Naive thymus-derived CD4-positive, alpha-beta T cell (primary cell): ENCODE measurements at regions of chr19 and their contacts with region 1.

Region 1: GRCh38 chr19:6590827-6591319 is at the start of gene CD70:
- DNase-seq: peak in 6 of 9 donors; percentile 10 to 68 (median 17)
- ATAC-seq: peak; percentile 74
- H3K4me3 ChIP-seq: peak within 1 kb of the TSS; percentile 56
- H3K4me3 Mint-ChIP-seq: peak within 1 kb of the TSS; percentile 58 to 93 (median 82)
- H3K27ac ChIP-seq: no peak within 1 kb of the TSS
- H3K27ac Mint-ChIP-seq: peak within 1 kb of the TSS in 2 of 9 donors; percentile 1 to 87
- H3K4me1 ChIP-seq: peaks cover 30 to 46% of the 10 kb centered on the region in 2 donors
- H3K4me1 Mint-ChIP-seq: peaks cover 40 to 61% (median 47%) of the 10 kb centered on the region in 7 donors
- H3K27me3 ChIP-seq: peaks cover 0 to 20% of the 10 kb centered on the region in 2 donors
- H3K27me3 Mint-ChIP-seq: peaks cover 46 to 71% (median 66%) of the 10 kb centered on the region in 5 donors
- total RNA-seq, gene CD70: 1.2 to 39.6 TPM in 2 of 5 experiments, not detected in the others

Region 2: GRCh38 chr19:6412447-6413091 is 178.3 kb before region 1 on chr19:
- CTCF ChIA-PET with region 1: no interaction called
- POLR2A ChIA-PET with region 1: no interaction called
- intact Hi-C with region 1: no loop called
- DNase-seq: peak in 6 of 9 donors; percentile 39 to 57 (median 47)
- ATAC-seq: peak; percentile 79
- H3K4me3 ChIP-seq: no peak overlapping the region
- H3K4me3 Mint-ChIP-seq: peak overlapping the region in 1 of 10 donors; percentile 20
- H3K27ac ChIP-seq: no peak overlapping the region
- H3K27ac Mint-ChIP-seq: no peak overlapping the region
- H3K4me1 ChIP-seq: no peaks in the 10 kb centered on the region
- H3K4me1 Mint-ChIP-seq: no peaks in the 10 kb centered on the region
- H3K27me3 ChIP-seq: no peaks in the 10 kb centered on the region
- H3K27me3 Mint-ChIP-seq: no peaks in the 10 kb centered on the region

Region 3: DNA sequence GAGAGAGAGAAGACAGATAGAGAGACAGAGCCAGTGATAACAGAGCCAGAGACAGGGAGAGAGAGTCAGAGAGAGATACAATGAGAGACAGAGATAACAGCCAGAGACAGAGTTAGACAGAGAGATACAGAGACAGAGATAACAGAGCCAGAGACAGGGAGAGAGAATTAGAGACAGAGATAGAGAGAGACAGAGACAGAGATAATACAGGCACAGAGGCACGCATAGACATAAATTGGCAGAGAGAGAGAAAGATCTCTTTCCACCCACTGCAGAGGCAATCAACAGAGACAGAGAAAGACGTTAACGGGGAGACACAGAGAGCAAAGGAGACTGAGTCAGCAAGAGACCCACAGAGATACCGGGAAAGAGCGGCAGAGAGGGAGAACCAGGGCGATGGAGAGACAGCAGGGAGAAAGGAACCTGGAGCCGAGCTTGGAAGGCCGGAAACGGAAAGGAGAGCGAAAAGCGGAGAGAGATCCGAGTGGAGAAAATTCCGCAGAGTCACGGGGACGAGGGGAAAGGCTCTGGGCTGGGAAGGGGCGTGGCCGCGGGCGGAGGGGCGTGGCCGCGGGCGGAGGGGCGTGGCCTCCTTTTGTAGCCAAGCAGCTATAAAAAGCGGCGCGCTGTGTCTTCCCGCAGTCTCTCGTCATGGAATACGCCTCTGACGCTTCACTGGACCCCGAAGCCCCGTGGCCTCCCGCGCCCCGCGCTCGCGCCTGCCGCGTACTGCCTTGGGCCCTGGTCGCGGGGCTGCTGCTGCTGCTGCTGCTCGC is 60.3 kb before region 1 on chr19 and contains the start of gene TNFSF9:
- CTCF ChIA-PET with region 1: no interaction called
- POLR2A ChIA-PET with region 1: no interaction called
- intact Hi-C with region 1: loop called (anchors 5 kb)
- DNase-seq: peak; percentile 51 to 93 (median 65)
- ATAC-seq: peak; percentile 90
- H3K4me3 ChIP-seq: peak within 1 kb of the TSS; percentile 36
- H3K4me3 Mint-ChIP-seq: peak within 1 kb of the TSS; percentile 81 to 93 (median 86)
- H3K27ac ChIP-seq: peak within 1 kb of the TSS; percentile 58
- H3K27ac Mint-ChIP-seq: peak within 1 kb of the TSS; percentile 9 to 85 (median 64)
- H3K4me1 ChIP-seq: peaks cover 20 to 27% of the 10 kb centered on the region in 2 donors
- H3K4me1 Mint-ChIP-seq: peaks cover 33 to 43% (median 37%) of the 10 kb centered on the region in 7 donors
- H3K27me3 ChIP-seq: peaks cover 0 to 16% of the 10 kb centered on the region in 2 donors
- H3K27me3 Mint-ChIP-seq: peaks cover 27 to 46% (median 28%) of the 10 kb centered on the region in 5 donors
- total RNA-seq, gene TNFSF9: 0.38 to 3.9 (median 3.0) TPM in 4 of 5 experiments, not detected in the other

Region 4: GRCh38 chr19:6551607-6552450 is 39.0 kb before region 1 on chr19:
- CTCF ChIA-PET with region 1: interaction called, 5 read pairs
- POLR2A ChIA-PET with region 1: no interaction called
- intact Hi-C with region 1: loop called in 1 of 2 experiments (anchors 5 kb)
- DNase-seq: peak; percentile 31 to 62 (median 56)
- ATAC-seq: peak; percentile 97
- H3K4me3 ChIP-seq: no peak overlapping the region
- H3K4me3 Mint-ChIP-seq: peak overlapping the region in 6 of 10 donors; percentile 4 to 47 (median 38)
- H3K27ac ChIP-seq: peak overlapping the region; percentile 21
- H3K27ac Mint-ChIP-seq: no peak overlapping the region
- H3K4me1 ChIP-seq: peaks cover 11 to 14% of the 10 kb centered on the region in 2 donors
- H3K4me1 Mint-ChIP-seq: peaks cover 0 to 16% (median 9%) of the 10 kb centered on the region in 7 donors
- H3K27me3 ChIP-seq: no peaks in the 10 kb centered on the region
- H3K27me3 Mint-ChIP-seq: peaks cover 0 to 3% (median 0%) of the 10 kb centered on the region in 5 donors

Region 5: DNA sequence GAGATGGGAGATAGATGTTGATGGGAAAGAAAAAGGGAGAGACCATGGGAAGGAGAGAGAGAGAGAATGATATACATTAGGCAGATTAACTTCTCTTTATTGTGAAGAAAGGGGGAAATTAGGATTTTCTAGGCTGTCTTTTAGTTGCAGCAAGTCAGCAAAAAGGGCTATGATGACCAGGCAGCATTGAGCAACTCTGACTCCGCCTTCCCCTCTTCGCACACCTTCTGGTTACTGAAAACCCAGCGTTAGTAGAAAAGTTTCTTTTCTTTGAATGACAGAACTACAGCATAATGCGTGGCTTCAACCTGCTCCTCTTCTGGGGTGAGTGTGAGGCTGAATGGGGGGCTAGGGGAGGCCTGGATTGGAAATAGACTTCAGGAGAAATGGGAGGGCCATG is 296.4 kb after region 1 on chr19 and contains the start of gene ADGRE1:
- CTCF ChIA-PET with region 1: no interaction called
- POLR2A ChIA-PET with region 1: no interaction called
- intact Hi-C with region 1: no loop called
- DNase-seq: peak in 2 of 9 donors; percentile 22 to 36
- ATAC-seq: peak; percentile 34
- H3K4me3 ChIP-seq: no peak within 1 kb of the TSS
- H3K4me3 Mint-ChIP-seq: peak within 1 kb of the TSS; percentile 3 to 85 (median 64)
- H3K27ac ChIP-seq: no peak within 1 kb of the TSS
- H3K27ac Mint-ChIP-seq: peak within 1 kb of the TSS; percentile 33 to 94 (median 79)
- H3K4me1 ChIP-seq: peaks cover 25 to 60% of the 10 kb centered on the region in 2 donors
- H3K4me1 Mint-ChIP-seq: peaks cover 39 to 73% (median 62%) of the 10 kb centered on the region in 7 donors
- H3K27me3 ChIP-seq: no peaks in the 10 kb centered on the region
- H3K27me3 Mint-ChIP-seq: no peaks in the 10 kb centered on the region
- total RNA-seq, gene ADGRE1: 7.1 to 31.7 (median 9.1) TPM